ENCODE measurements at regions of chr3 and their contacts with region 1.

Region 1: GRCh38 chr3:157130467-157131251 is 29.3 kb downstream of the CCNL1 start:
- DNase-seq: peak; percentile 84
- H3K4me3 Mint-ChIP-seq: peak overlapping the region; percentile 45
- H3K27ac Mint-ChIP-seq: peak overlapping the region; percentile 98
- H3K4me1 Mint-ChIP-seq: peaks cover 73% of the 10 kb centered on the region
- H3K27me3 Mint-ChIP-seq: no peaks in the 10 kb centered on the region

Region 2: GRCh38 chr3:156554842-156555687 is 575.6 kb before region 1 on chr3 and contains the start of gene SSR3:
- CTCF ChIA-PET with region 1: interaction called, 3 read pairs
- POLR2A ChIA-PET with region 1: no interaction called
- intact Hi-C with region 1: loop called (anchors 2 kb)
- DNase-seq: peak; percentile 99
- H3K4me3 Mint-ChIP-seq: peak within 1 kb of the TSS; percentile 97
- H3K27ac Mint-ChIP-seq: peak within 1 kb of the TSS; percentile 88
- H3K4me1 Mint-ChIP-seq: peaks cover 46% of the 10 kb centered on the region
- H3K27me3 Mint-ChIP-seq: no peaks in the 10 kb centered on the region
- total RNA-seq, gene SSR3: 162 to 170 TPM

Region 3: DNA sequence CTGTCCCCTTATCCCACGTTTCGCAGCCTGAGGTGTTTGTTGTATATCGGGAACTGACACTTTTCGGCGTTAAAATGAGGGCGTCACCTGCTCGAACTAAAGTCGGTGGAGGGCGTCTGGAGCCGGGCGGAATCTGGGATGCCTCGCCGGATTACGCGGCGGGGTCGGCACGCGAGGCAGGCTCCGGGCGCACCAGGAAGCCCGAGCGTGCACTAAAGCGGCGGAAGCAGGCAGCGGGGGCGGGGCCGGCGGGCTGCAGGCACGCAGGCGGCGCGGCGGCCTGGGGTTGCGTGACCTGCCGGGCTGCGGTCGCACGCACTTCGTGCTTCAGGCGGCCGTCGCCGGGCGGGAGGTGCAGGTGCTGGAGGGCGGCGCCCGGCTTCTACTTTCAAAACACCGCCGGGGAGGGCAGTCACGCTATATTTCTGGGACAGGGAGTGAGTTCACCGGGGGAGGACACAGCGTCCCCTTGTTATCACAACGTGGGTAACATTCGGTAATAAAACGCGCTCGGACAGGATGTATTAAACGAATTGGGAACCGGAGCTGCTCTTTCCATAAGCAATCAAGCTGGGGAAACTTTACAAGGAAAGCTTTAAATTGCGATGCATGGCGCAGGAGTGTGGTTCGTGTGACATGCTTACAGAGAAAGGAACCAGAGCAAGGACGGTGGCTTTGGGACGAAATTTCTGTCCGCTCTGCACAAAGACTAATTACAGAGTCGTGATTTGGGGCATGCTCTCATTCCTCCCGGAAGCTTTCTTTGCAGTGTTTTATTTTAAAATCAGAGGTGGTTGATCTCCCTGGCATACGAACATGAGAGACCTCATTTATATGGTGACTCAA is 313.6 kb before region 1 on chr3:
- CTCF ChIA-PET with region 1: no interaction called
- POLR2A ChIA-PET with region 1: no interaction called
- intact Hi-C with region 1: loop called (anchors 1 kb)
- DNase-seq: peak; percentile 92
- H3K4me3 Mint-ChIP-seq: peak overlapping the region; percentile 85
- H3K27ac Mint-ChIP-seq: peak overlapping the region; percentile 90
- H3K4me1 Mint-ChIP-seq: peaks cover 43% of the 10 kb centered on the region
- H3K27me3 Mint-ChIP-seq: no peaks in the 10 kb centered on the region

Region 4: DNA sequence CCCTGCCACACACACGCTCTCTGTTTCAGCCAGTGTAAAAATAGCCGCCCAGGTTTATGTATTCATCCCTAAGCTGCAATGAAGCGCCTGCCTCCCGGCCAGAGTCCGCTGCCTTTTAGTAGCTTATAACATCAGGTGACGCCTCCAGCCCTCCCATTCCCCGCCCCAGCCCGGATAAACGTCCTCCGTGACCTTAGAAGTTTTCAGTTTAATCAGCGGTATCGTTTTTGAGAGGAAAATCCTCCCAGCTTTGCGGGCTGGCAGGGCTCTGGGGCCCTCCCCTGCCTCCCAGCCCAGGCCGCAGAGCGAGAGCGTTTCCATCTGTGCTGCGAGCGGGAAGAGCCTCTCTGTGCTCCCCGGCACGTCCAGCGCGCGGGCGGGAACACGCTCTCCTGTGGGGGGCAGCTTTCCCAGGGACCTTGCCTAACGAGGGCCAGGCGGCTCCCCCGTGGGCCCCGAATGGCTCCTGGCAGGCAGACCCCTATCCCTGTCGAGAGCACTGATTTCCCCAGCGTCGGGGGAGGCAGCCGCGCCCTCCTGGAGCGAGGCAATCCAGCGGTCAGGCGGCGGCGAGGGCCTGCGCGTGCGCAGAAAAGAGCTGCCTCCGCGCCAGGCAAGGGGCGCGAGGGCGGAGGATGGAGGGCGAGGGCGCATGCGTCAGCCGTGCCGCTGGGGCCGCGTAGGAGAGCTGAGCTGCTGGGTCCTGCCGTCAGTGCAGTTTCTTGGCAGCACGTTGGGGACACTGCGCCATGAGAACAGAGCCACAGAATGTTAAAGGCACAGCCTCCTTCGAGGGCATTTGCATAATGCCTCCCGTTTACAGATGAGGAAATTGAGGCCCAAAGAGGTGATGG is 41.8 kb before region 1 on chr3:
- CTCF ChIA-PET with region 1: interaction called, 53 read pairs
- POLR2A ChIA-PET with region 1: interaction called, 67 read pairs
- intact Hi-C with region 1: loop called (anchors 1 kb)
- DNase-seq: peak; percentile 96
- H3K4me3 Mint-ChIP-seq: peak overlapping the region; percentile 72
- H3K27ac Mint-ChIP-seq: peak overlapping the region; percentile 96
- H3K4me1 Mint-ChIP-seq: peaks cover 64% of the 10 kb centered on the region
- H3K27me3 Mint-ChIP-seq: no peaks in the 10 kb centered on the region

Region 5: GRCh38 chr3:157113832-157114505 is 16.7 kb before region 1 on chr3:
- CTCF ChIA-PET with region 1: interaction called, 10 read pairs
- POLR2A ChIA-PET with region 1: no interaction called
- intact Hi-C with region 1: no loop called
- DNase-seq: no peak
- H3K4me3 Mint-ChIP-seq: no peak overlapping the region
- H3K27ac Mint-ChIP-seq: no peak overlapping the region
- H3K4me1 Mint-ChIP-seq: no peaks in the 10 kb centered on the region
- H3K27me3 Mint-ChIP-seq: peaks cover 4% of the 10 kb centered on the region

Region 6: GRCh38 chr3:157159762-157160657 is 29.4 kb after region 1 on chr3 and contains the start of gene CCNL1:
- CTCF ChIA-PET with region 1: interaction called, 3 read pairs
- POLR2A ChIA-PET with region 1: interaction called, 9 read pairs
- intact Hi-C with region 1: loop called (anchors 1 kb)
- DNase-seq: peak; percentile 96
- H3K4me3 Mint-ChIP-seq: peak within 1 kb of the TSS; percentile 94
- H3K27ac Mint-ChIP-seq: peak within 1 kb of the TSS; percentile 99
- H3K4me1 Mint-ChIP-seq: peaks cover 46% of the 10 kb centered on the region
- H3K27me3 Mint-ChIP-seq: peaks cover 2% of the 10 kb centered on the region
- total RNA-seq, gene CCNL1: 144 to 150 TPM

Measured in activated CD4-positive, alpha-beta memory T cell treated with anti-CD3 and anti-CD28 coated beads for 36 hours (primary cell).